ENCODE measurements at regions of chr5 and their contacts with region 1.

Region 1: DNA sequence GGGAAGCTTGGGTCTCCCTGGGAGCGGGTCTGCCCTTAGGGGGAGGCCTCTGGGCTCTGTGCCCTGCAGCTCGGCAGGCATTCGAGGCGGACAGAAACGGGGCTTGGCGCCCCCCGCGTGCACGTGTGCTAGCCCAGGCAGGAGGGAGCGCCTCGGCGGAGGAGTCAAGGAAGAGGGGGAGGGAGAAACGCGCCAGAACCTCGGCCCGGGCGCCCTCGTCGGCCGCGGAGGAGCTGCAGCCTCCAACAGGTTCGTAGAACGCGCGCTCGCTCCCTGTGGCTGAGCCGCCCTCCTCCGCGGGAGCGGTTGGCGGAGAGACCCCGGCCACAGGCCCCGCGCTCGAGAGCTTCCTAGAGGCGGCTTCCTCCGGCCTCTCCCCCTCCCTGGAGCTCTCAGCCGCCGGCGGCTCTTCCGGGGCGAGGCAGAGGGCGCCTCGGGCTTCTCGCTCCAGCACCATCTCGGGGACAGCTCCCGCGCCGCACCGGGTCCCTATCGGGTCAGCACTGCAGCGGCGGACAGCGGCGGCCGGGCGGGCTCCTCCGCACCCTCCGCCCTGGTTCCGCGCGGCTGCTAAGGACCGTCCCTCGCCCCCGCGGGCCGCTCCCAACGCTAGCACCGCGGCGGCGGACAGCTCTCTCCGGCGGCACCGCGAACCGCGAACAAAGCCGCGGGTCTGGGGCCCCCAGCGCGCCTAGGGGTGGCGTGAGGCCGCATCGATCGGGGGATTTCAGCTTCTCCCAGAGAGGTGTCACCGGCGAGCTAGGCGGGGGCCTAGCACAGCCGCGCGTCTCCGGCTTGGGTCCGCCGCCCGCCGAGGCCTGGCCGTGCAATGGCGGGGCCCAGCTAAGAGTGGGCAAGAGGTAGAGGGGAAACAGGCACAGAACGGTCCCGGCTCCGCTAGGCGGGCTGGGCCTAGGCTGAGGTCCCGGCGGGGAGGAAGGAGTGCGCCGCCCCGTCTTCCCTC is 74.6 kb upstream of the CPLX2 start:
- DNase-seq: peak; percentile 79
- H3K4me3 Mint-ChIP-seq: no peak overlapping the region
- H3K27ac Mint-ChIP-seq: no peak overlapping the region
- H3K4me1 Mint-ChIP-seq: no peaks in the 10 kb centered on the region
- H3K27me3 Mint-ChIP-seq: peaks cover 37% of the 10 kb centered on the region

Region 2: DNA sequence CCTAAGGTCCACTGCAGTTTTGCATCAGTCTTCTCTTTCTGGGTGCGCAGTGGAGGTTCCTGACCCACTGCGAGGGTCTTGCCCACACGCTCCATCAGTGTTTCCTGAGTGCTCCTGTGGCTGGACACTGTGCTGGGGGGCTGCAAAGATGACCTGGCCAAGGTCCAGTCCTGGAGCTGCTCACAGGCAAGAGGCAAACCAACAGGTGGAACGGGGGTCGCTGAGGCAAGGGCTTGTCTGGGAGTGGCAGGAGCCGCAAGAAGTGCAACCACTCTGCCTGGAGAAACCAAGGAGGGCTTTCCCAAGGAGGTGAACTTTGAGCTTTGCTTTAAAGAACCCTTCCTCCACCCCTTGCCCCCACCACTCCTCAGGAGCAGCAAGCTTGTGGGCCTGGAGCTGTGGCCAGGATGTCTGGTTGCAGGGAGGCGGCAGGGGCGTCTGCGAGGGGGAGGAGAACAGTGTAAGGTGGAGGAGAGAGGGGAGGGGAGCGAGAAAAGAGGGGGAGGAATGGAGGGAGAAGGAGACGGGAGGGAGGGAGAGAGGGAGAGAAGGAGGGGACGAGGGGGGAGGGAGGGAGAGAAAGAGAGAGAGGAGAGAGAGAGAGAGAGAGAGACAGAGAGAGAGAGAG is 74.1 kb after region 1 on chr5:
- intact Hi-C with region 1: loop called (anchors 1 kb)
- DNase-seq: no peak
- H3K4me3 Mint-ChIP-seq: no peak overlapping the region
- H3K27ac Mint-ChIP-seq: no peak overlapping the region
- H3K4me1 Mint-ChIP-seq: peaks cover 4% of the 10 kb centered on the region
- H3K27me3 Mint-ChIP-seq: peaks cover 51% of the 10 kb centered on the region

Measured in activated T-helper 2 cell treated with anti-CD3 and anti-CD28 coated beads, Interferon-gamma antibody, Interleukin-2, Interleukin-4, amounts not matched to agents 10 μg/mL and 5 μg/mL and 100 μg/mL, durations not matched to agents 14 hours and 24 hours and 36 hours (primary cell).